ENCODE measurements at regions of chr9 and their contacts with region 1.

Region 1: GRCh38 chr9:130265431-130266235 is at the start of gene HMCN2:
- DNase-seq: peak; percentile 57 to 61
- ATAC-seq: peak; percentile 52 to 76 (median 63)
- H3K4me3 ChIP-seq: peak within 1 kb of the TSS in 9 of 10 donors; percentile 28 to 61 (median 52)
- H3K27ac ChIP-seq: peak within 1 kb of the TSS in 7 of 10 donors; percentile 29 to 81 (median 64)
- H3K4me1 ChIP-seq: peaks cover 0 to 44% (median 20%) of the 10 kb centered on the region in 9 donors
- H3K27me3 ChIP-seq: peaks cover 0 to 76% (median 65%) of the 10 kb centered on the region in 7 donors
- CTCF ChIP-seq: peak in 1 of 9 donors; percentile 4
- total RNA-seq, gene HMCN2: 2.6 to 6.1 (median 4.9) TPM

Region 2: DNA sequence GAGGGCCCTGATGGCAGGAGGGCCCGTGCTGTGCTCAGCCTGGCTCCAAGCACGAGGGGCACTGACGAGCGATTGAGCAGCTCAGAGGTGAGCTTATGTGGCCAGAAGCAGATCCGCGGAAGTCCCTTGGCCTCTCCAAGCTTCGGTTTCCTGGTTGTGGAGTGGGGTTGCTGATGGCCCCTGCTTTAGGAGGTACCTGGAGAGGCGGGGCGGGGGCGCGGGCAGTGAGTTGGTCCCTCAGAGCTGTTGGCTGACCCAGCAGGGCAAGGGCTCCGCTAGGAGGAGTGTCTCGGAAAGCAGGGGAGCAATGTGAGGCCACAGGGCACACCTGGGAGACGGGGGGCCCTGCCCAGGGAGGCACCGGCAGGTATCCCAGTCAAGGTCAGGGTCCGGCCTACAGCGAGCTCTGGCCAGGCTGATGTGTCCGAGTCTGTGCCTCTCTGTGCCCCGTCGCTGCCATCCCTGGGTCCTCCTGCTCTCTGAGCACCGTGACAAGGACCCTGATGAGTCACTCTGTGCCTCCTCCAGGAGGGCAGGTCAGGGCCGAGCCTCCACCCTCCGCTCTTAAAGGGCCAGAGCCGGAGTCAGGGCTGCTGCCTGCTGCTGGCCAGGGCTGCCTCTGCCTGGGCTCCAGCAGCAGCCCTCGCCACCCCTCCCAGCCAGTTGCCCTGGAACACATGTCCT is 78.7 kb before region 1 on chr9:
- intact Hi-C with region 1: no loop called
- DNase-seq: no peak
- ATAC-seq: peak; percentile 40 to 84 (median 72)
- H3K4me3 ChIP-seq: peak overlapping the region in 5 of 10 donors; percentile 19 to 32 (median 30)
- H3K27ac ChIP-seq: peak overlapping the region in 3 of 10 donors; percentile 25 to 53 (median 47)
- H3K4me1 ChIP-seq: peaks cover 5 to 40% (median 17%) of the 10 kb centered on the region in 9 donors
- H3K27me3 ChIP-seq: no peaks in the 10 kb centered on the region
- CTCF ChIP-seq: no peak

Region 3: DNA sequence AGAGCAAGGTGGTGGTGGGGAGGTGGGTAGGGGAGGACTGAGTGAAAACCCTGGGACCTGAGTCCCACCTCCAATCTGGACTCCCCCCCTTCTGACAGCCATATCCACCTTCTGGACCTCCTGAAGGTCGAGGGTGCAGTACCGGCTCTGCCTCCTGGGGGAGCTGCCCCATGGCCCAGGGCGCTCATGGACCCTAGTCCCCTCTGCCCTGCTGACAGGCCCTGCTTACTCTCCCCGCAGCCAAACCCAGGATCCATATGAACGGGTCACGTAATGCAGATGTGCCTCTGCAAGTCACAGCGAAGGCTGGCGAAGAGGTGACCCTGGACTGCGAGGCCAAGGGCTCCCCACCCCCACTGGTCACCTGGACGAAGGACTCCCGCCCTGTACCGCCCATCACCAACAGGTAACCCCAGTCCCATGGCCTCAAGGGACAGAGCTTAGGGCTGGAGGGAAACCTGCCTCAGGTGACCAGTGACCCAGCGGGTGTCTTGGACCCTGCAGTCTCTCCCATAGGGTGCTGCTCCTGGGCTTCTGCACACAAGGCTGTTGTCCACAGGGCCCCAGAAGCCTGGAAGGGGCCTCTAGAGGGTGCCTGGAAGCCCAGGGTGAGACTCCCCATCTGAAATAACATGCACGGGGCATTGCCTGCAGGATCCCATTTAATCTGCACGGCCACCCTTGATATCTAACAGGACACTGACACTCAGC is 61.6 kb after region 1 on chr9:
- intact Hi-C with region 1: loop called in 3 of 10 experiments (anchors 5 to 10 kb)
- DNase-seq: no peak
- ATAC-seq: peak in 2 of 8 donors; percentile 1 to 2
- H3K4me3 ChIP-seq: no peak overlapping the region
- H3K27ac ChIP-seq: peak overlapping the region in 6 of 10 donors; percentile 35 to 75 (median 50)
- H3K4me1 ChIP-seq: peaks cover 0 to 38% (median 19%) of the 10 kb centered on the region in 9 donors
- H3K27me3 ChIP-seq: peaks cover 6 to 53% (median 32%) of the 10 kb centered on the region in 7 donors
- CTCF ChIP-seq: peak in 7 of 9 donors; percentile 10 to 28 (median 23)

Region 4: DNA sequence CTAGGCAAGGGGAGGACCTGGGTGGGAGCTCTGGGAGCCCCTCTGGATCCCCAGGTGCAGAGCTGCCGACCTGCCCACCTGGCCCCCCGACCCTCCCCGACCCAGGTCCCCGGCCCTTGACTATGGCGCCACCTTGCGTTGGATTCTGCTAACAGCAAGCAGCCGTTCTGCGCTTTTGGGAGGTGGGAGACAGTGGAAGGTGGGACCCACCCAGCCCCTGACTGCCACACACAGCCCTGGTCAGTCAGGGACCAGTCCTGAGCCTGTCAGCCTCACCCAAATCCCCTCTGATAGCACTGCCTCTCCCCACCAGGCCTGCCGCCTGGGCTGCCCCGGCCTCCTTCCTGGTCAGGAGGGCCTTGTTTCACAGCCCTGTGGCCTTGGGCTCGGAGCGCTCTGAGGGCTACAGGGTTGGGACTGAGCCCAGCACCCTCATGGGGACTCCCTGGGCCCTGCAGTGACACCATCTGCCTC is 77.8 kb after region 1 on chr9:
- intact Hi-C with region 1: loop called in 1 of 10 experiments (anchors 5 kb)
- DNase-seq: no peak
- ATAC-seq: peak in 7 of 8 donors; percentile 3 to 41 (median 24)
- H3K4me3 ChIP-seq: no peak overlapping the region
- H3K27ac ChIP-seq: no peak overlapping the region
- H3K4me1 ChIP-seq: no peaks in the 10 kb centered on the region
- H3K27me3 ChIP-seq: peaks cover 0 to 6% (median 0%) of the 10 kb centered on the region in 7 donors
- CTCF ChIP-seq: peak; percentile 65 to 81 (median 73)